GM12878 (cell line): ENCODE measurements at regions of chr5 and their contacts with region 1.

Region 1: GRCh38 chr5:94524841-94525697 is 93.3 kb downstream of the KIAA0825 start:
- DNase-seq: peak; percentile 9
- ATAC-seq: peak; percentile 94
- H3K4me3 ChIP-seq: no peak overlapping the region
- H3K27ac ChIP-seq: no peak overlapping the region
- H3K4me1 ChIP-seq: no peaks in the 10 kb centered on the region
- H3K27me3 ChIP-seq: no peaks in the 10 kb centered on the region
- CTCF ChIP-seq: peak; percentile 51 to 76 (median 61); a peak in 5 of 6 replicates
- EP300 ChIP-seq: no peak
- POLR2A ChIP-seq: no peak
- RAD21 ChIP-seq: peak; percentile 90

Region 2: GRCh38 chr5:94577466-94578245 is 52.6 kb after region 1 on chr5:
- CTCF ChIA-PET with region 1: interaction called, 3 read pairs
- POLR2A ChIA-PET with region 1: no interaction called
- RAD21 ChIA-PET with region 1: interaction called, 5 read pairs
- SMC1A ChIA-PET with region 1: interaction called, 12 read pairs
- in situ Hi-C with region 1: no loop called
- intact Hi-C with region 1: no loop called
- DNase-seq: peak; percentile 45
- ATAC-seq: peak; percentile 86
- H3K4me3 ChIP-seq: no peak overlapping the region
- H3K27ac ChIP-seq: peak overlapping the region; percentile 28; the same call in 1 of the 2 replicates
- H3K4me1 ChIP-seq: peaks cover 20% of the 10 kb centered on the region
- H3K27me3 ChIP-seq: no peaks in the 10 kb centered on the region
- CTCF ChIP-seq: no peak
- EP300 ChIP-seq: peak; percentile 44 to 69; a peak in 2 of 4 replicates
- POLR2A ChIP-seq: no peak
- RAD21 ChIP-seq: no peak

Region 3: DNA sequence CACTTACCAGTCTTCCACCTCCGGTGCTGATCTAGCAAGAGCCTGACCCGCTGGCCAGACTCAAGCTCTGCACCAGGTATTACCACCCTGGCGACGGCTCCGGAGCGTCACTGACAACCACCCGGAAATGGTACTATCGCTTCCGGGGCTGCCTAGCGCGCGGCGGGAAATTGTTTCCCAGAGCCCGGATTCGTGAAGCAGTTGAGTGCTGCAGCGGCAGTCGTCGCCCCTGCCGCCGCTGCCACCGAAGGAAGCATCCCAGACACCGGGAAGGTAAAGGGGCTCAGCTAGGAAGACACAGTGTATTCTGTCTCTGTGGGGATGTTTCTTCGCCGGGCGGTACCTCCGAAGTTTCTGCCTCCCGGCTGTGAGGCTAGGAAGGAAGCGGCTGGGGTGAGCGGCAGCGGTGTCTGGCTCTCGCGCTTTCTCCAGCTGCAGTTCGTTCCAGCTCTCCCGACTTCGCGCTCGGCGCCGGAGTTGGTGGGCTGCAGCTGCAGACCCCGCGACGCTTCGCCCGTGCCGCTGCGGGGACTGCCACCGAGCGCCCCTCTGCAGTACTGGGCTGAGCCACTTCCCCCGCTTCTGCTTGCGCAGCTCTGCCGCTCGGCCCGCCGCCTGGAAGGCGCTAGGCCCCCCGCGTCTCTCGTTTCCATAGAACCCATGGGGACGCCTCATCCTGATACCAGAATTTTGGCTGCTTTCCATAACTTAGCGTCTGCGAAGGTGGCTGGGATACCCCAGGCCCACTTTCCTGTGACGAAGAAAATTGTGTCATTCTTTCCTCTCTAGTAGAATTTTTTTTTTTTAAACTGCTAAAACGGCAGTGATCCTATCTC is 93.6 kb after region 1 on chr5 and contains the starts of genes KIAA0825 and SLF1:
- CTCF ChIA-PET with region 1: interaction called, 9 read pairs
- POLR2A ChIA-PET with region 1: no interaction called
- RAD21 ChIA-PET with region 1: interaction called, 8 read pairs
- SMC1A ChIA-PET with region 1: interaction called, 16 read pairs
- in situ Hi-C with region 1: no loop called
- intact Hi-C with region 1: loop called (anchors 2 kb)
- DNase-seq: peak; percentile 39
- ATAC-seq: peak; percentile 94
- H3K4me3 ChIP-seq: peak within 1 kb of the TSS; percentile 79
- H3K27ac ChIP-seq: peak within 1 kb of the TSS; percentile 45
- H3K4me1 ChIP-seq: peaks cover 3% of the 10 kb centered on the region
- H3K27me3 ChIP-seq: no peaks in the 10 kb centered on the region
- CTCF ChIP-seq: no peak
- EP300 ChIP-seq: no peak
- POLR2A ChIP-seq: peak; percentile 80
- RAD21 ChIP-seq: no peak
- polyA plus RNA-seq, gene KIAA0825: 0.90 to 1.9 TPM
- polyA plus RNA-seq, gene SLF1: 14.1 to 27.0 TPM

Region 4: GRCh38 chr5:94700592-94700991 is 175.5 kb after region 1 on chr5:
- CTCF ChIA-PET with region 1: interaction called, 10 read pairs
- POLR2A ChIA-PET with region 1: no interaction called
- RAD21 ChIA-PET with region 1: interaction called, 5 read pairs
- SMC1A ChIA-PET with region 1: interaction called, 13 read pairs
- in situ Hi-C with region 1: no loop called
- intact Hi-C with region 1: no loop called
- DNase-seq: peak; percentile 33
- ATAC-seq: peak; percentile 82
- H3K4me3 ChIP-seq: no peak overlapping the region
- H3K27ac ChIP-seq: peak overlapping the region; percentile 18; the same call in 1 of the 2 replicates
- H3K4me1 ChIP-seq: peaks cover 19% of the 10 kb centered on the region; the same call in 1 of the 2 replicates
- H3K27me3 ChIP-seq: no peaks in the 10 kb centered on the region
- CTCF ChIP-seq: no peak
- EP300 ChIP-seq: peak in 1 of 2 experiments; percentile 48; a peak in 2 of 4 replicates
- POLR2A ChIP-seq: no peak
- RAD21 ChIP-seq: no peak

Region 5: GRCh38 chr5:94725142-94725541 is 200.1 kb after region 1 on chr5:
- CTCF ChIA-PET with region 1: interaction called, 4 read pairs
- POLR2A ChIA-PET with region 1: interaction called, 3 read pairs
- RAD21 ChIA-PET with region 1: interaction called, 4 read pairs
- SMC1A ChIA-PET with region 1: interaction called, 12 read pairs
- in situ Hi-C with region 1: no loop called
- intact Hi-C with region 1: no loop called
- DNase-seq: no peak
- ATAC-seq: no peak
- H3K4me3 ChIP-seq: no peak overlapping the region
- H3K27ac ChIP-seq: no peak overlapping the region
- H3K4me1 ChIP-seq: no peaks in the 10 kb centered on the region
- H3K27me3 ChIP-seq: no peaks in the 10 kb centered on the region
- CTCF ChIP-seq: no peak
- EP300 ChIP-seq: no peak
- POLR2A ChIP-seq: no peak
- RAD21 ChIP-seq: no peak

Region 6: GRCh38 chr5:94740286-94740685 is 215.2 kb after region 1 on chr5:
- CTCF ChIA-PET with region 1: interaction called, 83 read pairs
- POLR2A ChIA-PET with region 1: interaction called, 5 read pairs
- RAD21 ChIA-PET with region 1: interaction called, 74 read pairs
- SMC1A ChIA-PET with region 1: interaction called, 59 read pairs
- in situ Hi-C with region 1: no loop called
- intact Hi-C with region 1: loop called (anchors 1 kb)
- DNase-seq: no peak
- ATAC-seq: no peak
- H3K4me3 ChIP-seq: no peak overlapping the region
- H3K27ac ChIP-seq: no peak overlapping the region
- H3K4me1 ChIP-seq: peaks cover 9% of the 10 kb centered on the region
- H3K27me3 ChIP-seq: no peaks in the 10 kb centered on the region
- CTCF ChIP-seq: no peak
- EP300 ChIP-seq: no peak
- POLR2A ChIP-seq: no peak
- RAD21 ChIP-seq: no peak